PC-9 (cell line): ENCODE measurements at regions of chr9 and their contacts with region 1.

Region 1: DNA sequence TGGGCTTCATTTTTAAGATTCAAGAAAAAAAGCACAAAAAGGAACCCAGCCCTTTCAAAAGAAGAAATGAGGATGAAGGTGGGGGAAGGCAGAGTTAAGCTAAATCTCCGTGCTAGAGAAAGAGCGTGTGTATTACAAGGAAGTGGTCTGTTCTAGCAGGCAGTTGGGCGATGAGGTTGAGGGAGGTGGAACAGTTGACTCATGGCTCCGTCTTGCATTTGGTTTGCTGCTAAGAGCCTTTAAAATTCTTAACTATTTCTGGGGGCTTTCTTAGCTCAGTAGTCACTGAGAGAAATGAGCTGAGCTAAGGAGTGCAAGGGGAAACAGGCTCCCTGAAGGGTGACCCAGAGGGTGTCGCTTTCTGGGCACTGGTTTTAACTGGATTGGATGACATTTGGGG is 117.4 kb downstream of the GCNT1 start:
- DNase-seq: no peak
- H3K4me3 ChIP-seq: peak overlapping the region; percentile 54; the same call in 1 of the 2 replicates
- H3K27ac ChIP-seq: peak overlapping the region; percentile 88; the same call in 1 of the 2 replicates
- H3K4me1 ChIP-seq: peaks cover 14% of the 10 kb centered on the region
- H3K27me3 ChIP-seq: no peaks in the 10 kb centered on the region
- CTCF ChIP-seq: no peak

Region 2: DNA sequence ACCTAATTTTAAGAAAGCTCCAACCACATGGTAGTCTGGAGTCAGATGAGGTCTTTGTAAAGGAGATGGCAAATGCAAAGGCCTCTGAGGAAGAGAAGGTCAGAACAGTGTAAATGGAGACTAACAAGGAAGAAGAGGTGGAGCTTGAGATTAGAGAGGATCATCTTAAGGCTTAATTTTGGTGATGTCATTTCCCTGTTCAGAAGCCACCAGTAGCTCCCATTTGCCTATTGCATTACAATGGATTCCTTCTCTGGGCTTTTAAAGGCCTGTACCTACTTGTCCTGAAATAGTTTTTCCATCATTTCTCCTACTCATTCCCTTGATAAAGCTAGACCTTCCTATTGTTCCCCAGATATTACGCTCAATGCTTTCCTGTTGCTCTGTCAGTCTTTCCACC is 669.8 kb before region 1 on chr9:
- CTCF ChIA-PET with region 1: no interaction called
- POLR2A ChIA-PET with region 1: interaction called, 18 read pairs
- intact Hi-C with region 1: no loop called
- DNase-seq: no peak
- H3K4me3 ChIP-seq: no peak overlapping the region
- H3K27ac ChIP-seq: no peak overlapping the region
- H3K4me1 ChIP-seq: peaks cover 28% of the 10 kb centered on the region
- H3K27me3 ChIP-seq: no peaks in the 10 kb centered on the region
- CTCF ChIP-seq: no peak

Region 3: GRCh38 chr9:76634356-76635022 is 58.1 kb after region 1 on chr9:
- CTCF ChIA-PET with region 1: no interaction called
- POLR2A ChIA-PET with region 1: no interaction called
- intact Hi-C with region 1: no loop called
- DNase-seq: peak in 1 of 2 experiments; percentile 89
- H3K4me3 ChIP-seq: no peak overlapping the region
- H3K27ac ChIP-seq: peak overlapping the region; percentile 58
- H3K4me1 ChIP-seq: peaks cover 16% of the 10 kb centered on the region
- H3K27me3 ChIP-seq: no peaks in the 10 kb centered on the region
- CTCF ChIP-seq: no peak